ENCODE measurements at regions of chr7 and their contacts with region 1.

Region 1: DNA sequence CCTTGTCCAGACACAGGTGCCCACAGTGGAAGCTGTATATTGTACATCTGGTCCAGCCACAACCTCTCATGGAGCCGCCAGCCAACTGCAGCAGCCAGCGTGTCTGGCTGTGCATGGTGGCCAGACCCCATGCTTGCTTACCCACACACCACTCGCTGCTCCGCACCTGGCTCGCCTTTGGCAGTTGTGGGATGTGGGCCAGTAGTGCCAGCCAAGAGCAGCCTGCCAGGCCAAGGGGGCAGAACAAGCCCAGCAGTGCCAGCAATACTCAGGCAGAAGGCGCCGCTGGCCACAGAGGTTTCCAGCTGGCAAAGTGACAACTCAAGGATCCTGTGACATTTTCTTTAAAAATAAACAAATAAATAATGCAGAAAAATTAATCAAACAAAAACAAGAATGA is 11.7 kb upstream of the TMEM243 start:
- DNase-seq: peak; percentile 20 to 77 (median 35)
- ATAC-seq: peak; percentile 59 to 80 (median 68)
- H3K4me3 ChIP-seq: no peak overlapping the region
- H3K27ac ChIP-seq: no peak overlapping the region
- H3K4me1 ChIP-seq: peaks cover 0 to 8% (median 0%) of the 10 kb centered on the region in 12 donors
- H3K27me3 ChIP-seq: no peaks in the 10 kb centered on the region
- CTCF ChIP-seq: no peak
- POLR2A ChIP-seq: no peak

Region 2: GRCh38 chr7:86926732-86927131 is 304.5 kb before region 1 on chr7:
- intact Hi-C with region 1: loop called in 5 of 10 experiments (anchors 5 kb)
- DNase-seq: no peak
- ATAC-seq: peak in 2 of 4 donors; percentile 38 to 59
- H3K4me3 ChIP-seq: no peak overlapping the region
- H3K27ac ChIP-seq: no peak overlapping the region
- H3K4me1 ChIP-seq: peaks cover 0 to 5% (median 2%) of the 10 kb centered on the region in 12 donors
- H3K27me3 ChIP-seq: no peaks in the 10 kb centered on the region
- CTCF ChIP-seq: peak; percentile 37 to 74 (median 64)
- POLR2A ChIP-seq: no peak

Region 3: GRCh38 chr7:86932038-86932512 is 299.2 kb before region 1 on chr7:
- intact Hi-C with region 1: loop called in 9 of 10 experiments (anchors 5 kb)
- DNase-seq: peak in 3 of 5 donors; percentile 17 to 41 (median 19)
- ATAC-seq: peak; percentile 87 to 99 (median 96)
- H3K4me3 ChIP-seq: no peak overlapping the region
- H3K27ac ChIP-seq: peak overlapping the region; percentile 1 to 75 (median 48)
- H3K4me1 ChIP-seq: peaks cover 0 to 13% (median 5%) of the 10 kb centered on the region in 12 donors
- H3K27me3 ChIP-seq: no peaks in the 10 kb centered on the region
- CTCF ChIP-seq: no peak
- POLR2A ChIP-seq: peak in 1 of 2 donors; percentile 26

Region 4: DNA sequence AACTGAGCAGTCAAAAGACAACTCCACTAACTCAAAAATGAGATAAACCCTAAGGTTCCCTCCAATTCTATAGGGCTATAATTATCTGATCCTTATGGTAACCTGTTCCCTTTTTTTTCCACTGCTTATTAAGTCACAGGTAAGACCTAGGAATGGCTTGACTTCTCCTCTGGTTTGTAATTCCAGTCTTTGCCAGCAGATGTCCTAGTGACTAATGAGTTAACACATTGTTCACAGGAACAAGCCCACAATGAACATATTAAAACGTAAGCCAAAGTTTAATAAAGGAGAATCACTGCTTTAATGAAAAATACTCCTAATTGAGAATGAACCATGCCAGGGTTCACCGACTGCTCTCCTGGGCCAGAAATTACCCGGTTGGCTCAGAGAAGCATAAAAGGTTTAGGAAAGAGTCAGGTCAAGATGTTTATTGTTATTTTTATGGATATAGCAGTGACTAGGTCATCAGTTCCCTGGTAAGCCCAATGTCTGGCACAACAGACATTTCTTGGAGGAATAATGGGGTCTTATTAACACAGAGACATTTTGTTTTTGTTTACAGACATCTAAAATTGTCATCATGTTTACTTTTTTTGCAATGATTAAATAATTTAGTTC is 291.9 kb before region 1 on chr7:
- intact Hi-C with region 1: loop called in 7 of 10 experiments (anchors 2 to 5 kb)
- DNase-seq: peak in 2 of 5 donors; percentile 26 to 29
- ATAC-seq: peak in 3 of 4 donors; percentile 52 to 76 (median 54)
- H3K4me3 ChIP-seq: no peak overlapping the region
- H3K27ac ChIP-seq: no peak overlapping the region
- H3K4me1 ChIP-seq: no peaks in the 10 kb centered on the region
- H3K27me3 ChIP-seq: no peaks in the 10 kb centered on the region
- CTCF ChIP-seq: peak; percentile 54 to 76 (median 72)
- POLR2A ChIP-seq: no peak

Region 5: DNA sequence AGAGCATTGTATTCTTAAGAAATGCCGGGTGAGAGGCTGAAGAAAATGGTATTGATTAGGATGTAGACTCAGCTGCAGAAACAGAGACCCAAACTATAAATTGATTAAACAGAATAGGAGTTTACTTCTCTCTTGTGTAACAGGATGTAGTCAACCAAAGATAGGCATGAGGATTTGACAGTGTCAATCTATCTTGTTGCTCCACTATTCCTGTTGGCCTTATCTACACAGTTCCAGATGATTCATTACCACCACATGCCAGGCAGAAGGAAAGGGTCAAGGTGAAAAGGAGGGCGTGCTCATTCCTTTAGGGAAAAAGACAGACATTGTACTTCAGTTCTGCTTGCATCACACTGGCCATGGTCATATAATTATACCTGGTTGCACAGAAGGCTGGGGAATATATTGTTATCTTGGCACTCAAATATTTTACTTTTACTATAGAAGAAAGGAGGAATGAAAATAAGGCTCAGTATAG is 90.9 kb before region 1 on chr7:
- intact Hi-C with region 1: no loop called
- DNase-seq: no peak
- ATAC-seq: no peak
- H3K4me3 ChIP-seq: no peak overlapping the region
- H3K27ac ChIP-seq: no peak overlapping the region
- H3K4me1 ChIP-seq: no peaks in the 10 kb centered on the region
- H3K27me3 ChIP-seq: peaks cover 0 to 6% (median 0%) of the 10 kb centered on the region in 9 donors
- CTCF ChIP-seq: no peak
- POLR2A ChIP-seq: no peak